Calu3 (cell line): ENCODE measurements at regions of chr4 and their contacts with region 1.

Region 1: DNA sequence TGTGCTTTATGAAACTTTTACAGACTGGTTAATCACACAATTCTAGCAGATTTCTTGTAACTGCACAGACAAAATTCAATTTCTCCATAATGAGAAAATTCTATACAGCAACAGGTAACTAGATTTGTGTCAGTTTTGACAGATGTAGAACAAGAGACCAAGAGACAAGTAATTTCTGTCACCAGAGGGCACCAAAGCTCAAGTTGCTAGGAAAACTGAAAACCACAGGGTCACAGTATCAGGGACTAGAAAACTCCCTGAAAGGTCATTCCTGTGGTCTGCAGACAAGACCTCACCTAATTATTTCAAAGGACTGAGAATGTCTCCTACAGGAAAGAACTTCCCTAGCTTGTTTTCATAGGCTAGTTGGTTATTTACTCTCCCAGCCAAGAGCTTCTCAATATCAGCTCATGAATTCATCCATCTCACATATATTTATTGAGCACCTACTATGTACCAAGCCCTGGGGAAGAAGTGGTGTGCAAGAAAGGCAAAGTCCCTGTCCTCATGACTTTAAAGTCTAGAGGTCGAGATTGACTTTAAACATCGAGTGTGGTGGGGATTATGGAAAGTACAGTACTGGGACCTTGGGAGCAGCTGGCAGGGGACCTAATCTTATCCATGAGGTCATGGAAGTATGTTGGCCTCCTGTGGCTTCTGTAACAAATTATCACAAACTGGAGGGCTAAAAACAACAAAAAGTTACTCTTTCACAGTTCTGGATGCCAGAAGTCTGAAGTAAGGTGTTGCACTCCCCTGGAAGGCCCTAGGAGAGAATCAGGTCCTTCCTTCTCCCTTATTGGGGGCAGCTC is 47.8 kb upstream of the SETD7 start:
- DNase-seq: peak; percentile 51
- H3K4me3 Mint-ChIP-seq: no peak overlapping the region
- H3K27ac Mint-ChIP-seq: no peak overlapping the region
- H3K4me1 Mint-ChIP-seq: peaks cover 12% of the 10 kb centered on the region
- H3K27me3 Mint-ChIP-seq: peaks cover 18% of the 10 kb centered on the region
- CTCF ChIP-seq: peak; percentile 28

Region 2: GRCh38 chr4:139651282-139652194 is 47.8 kb after region 1 on chr4:
- CTCF ChIA-PET with region 1: interaction called, 17 read pairs
- intact Hi-C with region 1: loop called (anchors 1 kb)
- DNase-seq: peak; percentile 56
- H3K4me3 Mint-ChIP-seq: no peak overlapping the region
- H3K27ac Mint-ChIP-seq: no peak overlapping the region
- H3K4me1 Mint-ChIP-seq: peaks cover 35% of the 10 kb centered on the region
- H3K27me3 Mint-ChIP-seq: no peaks in the 10 kb centered on the region
- CTCF ChIP-seq: peak; percentile 68

Region 3: DNA sequence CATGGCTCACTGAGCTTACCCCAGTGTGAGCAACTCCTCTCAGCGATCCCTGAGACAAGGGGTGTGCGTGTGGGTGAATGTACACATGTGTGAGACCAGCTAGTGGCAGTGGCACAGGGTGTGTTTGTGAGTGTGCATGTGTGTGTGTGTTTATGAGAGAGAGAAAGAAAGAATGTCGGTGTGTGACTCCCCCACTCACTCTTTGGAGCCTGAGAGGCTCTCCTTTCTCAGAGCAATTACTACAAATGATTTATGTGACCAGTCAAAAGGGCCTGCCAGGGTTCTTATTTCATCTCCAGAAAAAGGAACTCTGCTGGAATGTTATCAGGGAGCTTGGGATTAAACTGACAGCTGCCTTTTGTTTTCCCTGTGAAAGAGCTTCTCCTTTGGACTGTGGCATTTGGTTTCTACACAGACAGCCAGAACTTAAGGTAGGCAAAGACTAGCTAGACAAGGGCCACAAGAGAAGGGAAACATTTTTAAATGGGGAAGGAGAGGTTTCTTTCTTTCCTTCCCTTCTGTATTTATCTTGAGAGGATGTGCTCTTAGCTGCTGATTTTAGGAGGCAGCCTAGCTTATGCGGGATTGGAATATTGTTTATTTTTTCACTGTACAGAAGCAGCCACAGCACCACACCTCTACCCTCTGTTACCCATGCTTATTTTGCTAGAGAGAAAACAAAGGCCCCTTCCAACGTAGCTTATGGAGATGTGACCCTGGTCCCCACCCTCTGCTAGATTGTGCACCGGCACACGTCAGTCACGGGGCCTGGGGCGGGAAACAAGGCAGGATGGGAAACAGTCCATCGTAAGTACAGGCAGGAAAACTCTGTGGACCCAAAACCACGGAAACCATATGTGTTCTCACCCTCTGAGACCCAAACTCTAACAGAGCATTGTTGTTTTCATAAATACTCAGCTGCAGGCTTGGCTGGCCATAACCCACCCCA is 205.3 kb after region 1 on chr4:
- CTCF ChIA-PET with region 1: no interaction called
- intact Hi-C with region 1: no loop called
- DNase-seq: no peak
- H3K4me3 Mint-ChIP-seq: no peak overlapping the region
- H3K27ac Mint-ChIP-seq: no peak overlapping the region
- H3K4me1 Mint-ChIP-seq: no peaks in the 10 kb centered on the region
- H3K27me3 Mint-ChIP-seq: no peaks in the 10 kb centered on the region
- CTCF ChIP-seq: no peak